Panc1 (cell line): ENCODE measurements at regions of chr7 and their contacts with region 1.

Region 1: DNA sequence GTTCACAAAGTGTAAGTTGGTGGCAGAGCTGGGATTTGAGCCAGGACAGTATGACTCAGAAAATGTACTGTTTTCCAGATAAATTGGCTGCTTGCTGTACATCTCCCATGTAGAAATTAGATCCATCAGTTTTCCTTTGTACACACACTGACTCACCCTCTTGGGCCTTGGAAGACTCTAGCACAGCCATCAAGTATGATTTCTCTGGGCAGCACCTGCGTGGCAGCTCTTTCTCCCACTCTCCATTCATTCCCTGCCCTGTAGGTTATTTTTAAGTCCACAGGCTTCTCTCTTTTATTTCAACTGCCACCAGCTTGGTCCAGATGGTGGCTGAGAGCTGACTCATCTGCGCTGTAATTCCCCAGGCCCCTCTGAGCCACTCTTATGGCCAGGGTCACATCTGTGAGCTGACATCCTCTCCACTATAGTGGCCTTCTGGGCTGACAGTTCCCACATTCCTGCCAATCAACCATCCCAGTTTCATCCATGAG is 28.3 kb upstream of the SDK1 start:
- DNase-seq: peak; percentile 90
- ATAC-seq: peak; percentile 88
- H3K4me3 ChIP-seq: no peak overlapping the region
- H3K27ac ChIP-seq: peak overlapping the region; percentile 54
- H3K4me1 ChIP-seq: peaks cover 22% of the 10 kb centered on the region
- H3K27me3 ChIP-seq: no peaks in the 10 kb centered on the region
- CTCF ChIP-seq: no peak

Region 2: GRCh38 chr7:2802504-2803341 is 470.0 kb before region 1 on chr7:
- CTCF ChIA-PET with region 1: no interaction called
- POLR2A ChIA-PET with region 1: no interaction called
- in situ Hi-C with region 1: no loop called
- intact Hi-C with region 1: no loop called
- DNase-seq: peak; percentile 91
- ATAC-seq: peak; percentile 79
- H3K4me3 ChIP-seq: peak overlapping the region; percentile 30 to 55
- H3K27ac ChIP-seq: peak overlapping the region; percentile 99
- H3K4me1 ChIP-seq: peaks cover 79% of the 10 kb centered on the region
- H3K27me3 ChIP-seq: no peaks in the 10 kb centered on the region
- CTCF ChIP-seq: no peak

Region 3: GRCh38 chr7:3065724-3066143 is 207.0 kb before region 1 on chr7:
- CTCF ChIA-PET with region 1: no interaction called
- POLR2A ChIA-PET with region 1: no interaction called
- in situ Hi-C with region 1: no loop called
- intact Hi-C with region 1: loop called (anchors 5 kb)
- DNase-seq: peak; percentile 15
- ATAC-seq: peak; percentile 77
- H3K4me3 ChIP-seq: no peak overlapping the region
- H3K27ac ChIP-seq: no peak overlapping the region
- H3K4me1 ChIP-seq: no peaks in the 10 kb centered on the region
- H3K27me3 ChIP-seq: peaks cover 3% of the 10 kb centered on the region; the same call in 1 of the 2 replicates
- CTCF ChIP-seq: peak; percentile 87